Dorsolateral prefrontal cortex (tissue), 120 donors: ENCODE measurements at regions of chr19 and their contacts with region 1.

Region 1: GRCh38 chr19:47790398-47790814 is 11.9 kb downstream of the SELENOW start:
- DNase-seq: peak; percentile 70 to 86 (median 78)
- H3K4me3 ChIP-seq: no peak overlapping the region
- H3K27ac ChIP-seq: no peak overlapping the region
- H3K27me3 ChIP-seq: no peaks in the 10 kb centered on the region
- CTCF ChIP-seq: peak; percentile 51 to 86 (median 74)

Region 2: GRCh38 chr19:47756953-47757608 is 33.3 kb before region 1 on chr19:
- intact Hi-C with region 1: loop called (anchors 1 to 5 kb)
- DNase-seq: no peak
- H3K4me3 ChIP-seq: no peak overlapping the region
- H3K27ac ChIP-seq: no peak overlapping the region
- H3K27me3 ChIP-seq: no peaks in the 10 kb centered on the region
- CTCF ChIP-seq: no peak

Region 3: GRCh38 chr19:47765523-47766358 is 24.7 kb before region 1 on chr19:
- intact Hi-C with region 1: loop called (anchors 1 kb)
- DNase-seq: peak in 9 of 10 donors; percentile 44 to 80 (median 68)
- H3K4me3 ChIP-seq: no peak overlapping the region
- H3K27ac ChIP-seq: peak overlapping the region in 21 of 59 donors; percentile 4 to 74 (median 41)
- H3K27me3 ChIP-seq: no peaks in the 10 kb centered on the region
- CTCF ChIP-seq: peak; percentile 27 to 91 (median 80)

Region 4: GRCh38 chr19:47819858-47820257 is 29.5 kb after region 1 on chr19:
- intact Hi-C with region 1: no loop called
- DNase-seq: no peak
- H3K4me3 ChIP-seq: no peak overlapping the region
- H3K27ac ChIP-seq: no peak overlapping the region
- H3K27me3 ChIP-seq: peaks cover 0 to 36% (median 9%) of the 10 kb centered on the region in 45 donors
- CTCF ChIP-seq: no peak